Activated CD4-positive, alpha-beta memory T cell treated with anti-CD3 and anti-CD28 coated beads, Interleukin-2, amount 10 ng/mL, durations not matched to agents 7 days and 5 days (primary cell): ENCODE measurements at regions of chr10 and their contacts with region 1.

Region 1: GRCh38 chr10:102641880-102642735 is 2.2 kb upstream of the TRIM8 start:
- DNase-seq: peak; percentile 98
- H3K4me3 Mint-ChIP-seq: peak overlapping the region; percentile 87
- H3K27ac Mint-ChIP-seq: peak overlapping the region; percentile 84
- H3K4me1 Mint-ChIP-seq: peaks cover 18% of the 10 kb centered on the region
- H3K27me3 Mint-ChIP-seq: peaks cover 4% of the 10 kb centered on the region

Region 2: GRCh38 chr10:102450194-102450938 is 191.7 kb before region 1 on chr10:
- CTCF ChIA-PET with region 1: interaction called, 3 read pairs
- POLR2A ChIA-PET with region 1: interaction called, 17 read pairs
- DNase-seq: peak; percentile 92
- H3K4me3 Mint-ChIP-seq: peak overlapping the region; percentile 95
- H3K27ac Mint-ChIP-seq: peak overlapping the region; percentile 92
- H3K4me1 Mint-ChIP-seq: peaks cover 43% of the 10 kb centered on the region
- H3K27me3 Mint-ChIP-seq: no peaks in the 10 kb centered on the region

Region 3: GRCh38 chr10:102611514-102612087 is 30.5 kb before region 1 on chr10:
- CTCF ChIA-PET with region 1: interaction called, 4 read pairs
- POLR2A ChIA-PET with region 1: interaction called, 14 read pairs
- DNase-seq: no peak
- H3K4me3 Mint-ChIP-seq: no peak overlapping the region
- H3K27ac Mint-ChIP-seq: no peak overlapping the region
- H3K4me1 Mint-ChIP-seq: peaks cover 34% of the 10 kb centered on the region
- H3K27me3 Mint-ChIP-seq: no peaks in the 10 kb centered on the region

Region 4: DNA sequence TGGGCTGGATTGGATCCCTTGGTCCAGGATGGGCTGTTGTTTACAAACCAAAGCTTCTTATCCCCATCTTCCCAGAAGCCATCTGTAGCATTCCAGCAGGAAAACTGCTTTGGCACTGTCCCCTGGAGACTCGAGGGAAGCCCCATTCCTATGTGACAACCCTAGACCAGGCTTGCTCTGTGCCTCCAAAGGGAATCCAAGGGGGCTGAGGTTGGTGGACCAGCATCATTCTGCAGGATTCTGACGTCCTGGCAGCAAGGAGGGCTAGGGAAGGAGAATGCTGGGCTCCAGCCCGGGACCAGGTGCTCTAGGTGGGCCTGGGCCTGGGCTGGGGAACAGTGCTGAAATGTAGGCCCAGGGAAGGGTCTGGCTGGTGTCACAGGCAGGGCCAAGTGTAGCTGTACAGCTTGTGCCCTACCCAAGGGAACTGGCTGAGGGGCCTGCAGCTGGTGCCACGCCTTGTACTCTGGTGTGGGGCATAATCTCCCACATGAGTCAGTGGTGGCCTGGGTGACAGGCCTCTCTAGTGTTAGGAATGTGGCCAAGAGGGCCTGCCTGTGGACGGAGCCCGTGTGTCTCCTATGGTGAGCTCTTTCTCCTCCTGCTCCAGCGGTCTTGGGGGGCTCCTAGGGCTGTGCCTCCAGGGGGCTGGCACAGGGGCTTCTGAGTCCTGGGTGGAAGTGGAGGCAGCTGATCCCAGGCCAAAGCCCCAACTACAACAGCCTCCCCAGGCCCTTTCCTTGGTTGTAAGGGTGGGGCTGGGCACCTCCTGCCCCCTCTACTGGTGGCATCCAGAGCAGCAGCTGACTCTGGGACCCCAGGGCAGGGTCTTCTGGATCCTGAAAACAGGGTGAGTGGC is 27.3 kb after region 1 on chr10:
- CTCF ChIA-PET with region 1: interaction called, 20 read pairs
- POLR2A ChIA-PET with region 1: interaction called, 82 read pairs
- DNase-seq: no peak
- H3K4me3 Mint-ChIP-seq: no peak overlapping the region
- H3K27ac Mint-ChIP-seq: no peak overlapping the region
- H3K4me1 Mint-ChIP-seq: peaks cover 24% of the 10 kb centered on the region
- H3K27me3 Mint-ChIP-seq: no peaks in the 10 kb centered on the region

Region 5: GRCh38 chr10:102713814-102714620 is 71.9 kb after region 1 on chr10 and contains the start of gene ARL3:
- CTCF ChIA-PET with region 1: interaction called, 39 read pairs
- POLR2A ChIA-PET with region 1: interaction called, 130 read pairs
- DNase-seq: peak; percentile 98
- H3K4me3 Mint-ChIP-seq: peak within 1 kb of the TSS; percentile 82
- H3K27ac Mint-ChIP-seq: peak within 1 kb of the TSS; percentile 80
- H3K4me1 Mint-ChIP-seq: peaks cover 64% of the 10 kb centered on the region
- H3K27me3 Mint-ChIP-seq: no peaks in the 10 kb centered on the region
- total RNA-seq, gene ARL3: 5.7 to 6.1 TPM